ENCODE measurements at regions of chr6 and their contacts with region 1.

Region 1: DNA sequence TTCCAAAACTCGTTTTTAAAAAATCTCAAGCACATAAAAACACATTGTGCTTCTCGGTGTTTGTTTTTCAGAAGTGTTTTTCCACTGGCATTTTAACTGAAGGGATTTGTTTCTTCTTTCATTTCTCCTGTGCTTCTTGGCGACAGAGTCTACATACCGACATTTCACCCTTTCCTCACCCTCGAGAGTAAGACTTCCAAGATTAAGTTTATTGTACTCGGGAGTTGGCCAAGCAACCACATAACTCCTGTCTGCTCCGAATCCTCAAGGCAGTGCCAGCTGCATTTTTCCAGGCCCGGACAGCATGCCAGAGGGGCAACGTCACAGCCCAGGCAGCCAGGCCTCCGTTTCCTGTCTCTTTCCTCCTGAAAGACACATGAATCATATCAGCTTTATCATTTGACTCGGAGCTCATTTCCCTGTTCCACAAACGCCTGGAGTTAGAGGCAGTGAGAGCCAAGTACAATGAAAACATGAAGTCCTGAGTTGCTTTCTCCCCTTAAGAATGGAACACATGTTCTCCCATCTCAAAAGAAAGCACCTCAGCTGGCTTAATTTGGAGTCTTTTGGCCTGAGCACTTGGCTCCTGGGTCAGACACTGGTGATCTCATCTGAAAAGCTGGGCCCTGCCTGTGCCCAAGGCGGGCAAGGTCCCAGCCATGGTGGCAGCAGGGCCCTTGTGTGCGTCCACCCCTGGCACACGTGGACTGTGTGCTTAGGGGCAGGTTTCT is 23.2 kb upstream of the FAM50B start:
- DNase-seq: no peak
- ATAC-seq: peak; percentile 96
- H3K4me3 ChIP-seq: peak overlapping the region; percentile 14 to 35
- H3K27ac ChIP-seq: peak overlapping the region; percentile 96
- H3K4me1 ChIP-seq: peaks cover 28% of the 10 kb centered on the region
- H3K27me3 ChIP-seq: no peaks in the 10 kb centered on the region
- CTCF ChIP-seq: peak; percentile 17; the same call in 1 of the 2 replicates

Region 2: DNA sequence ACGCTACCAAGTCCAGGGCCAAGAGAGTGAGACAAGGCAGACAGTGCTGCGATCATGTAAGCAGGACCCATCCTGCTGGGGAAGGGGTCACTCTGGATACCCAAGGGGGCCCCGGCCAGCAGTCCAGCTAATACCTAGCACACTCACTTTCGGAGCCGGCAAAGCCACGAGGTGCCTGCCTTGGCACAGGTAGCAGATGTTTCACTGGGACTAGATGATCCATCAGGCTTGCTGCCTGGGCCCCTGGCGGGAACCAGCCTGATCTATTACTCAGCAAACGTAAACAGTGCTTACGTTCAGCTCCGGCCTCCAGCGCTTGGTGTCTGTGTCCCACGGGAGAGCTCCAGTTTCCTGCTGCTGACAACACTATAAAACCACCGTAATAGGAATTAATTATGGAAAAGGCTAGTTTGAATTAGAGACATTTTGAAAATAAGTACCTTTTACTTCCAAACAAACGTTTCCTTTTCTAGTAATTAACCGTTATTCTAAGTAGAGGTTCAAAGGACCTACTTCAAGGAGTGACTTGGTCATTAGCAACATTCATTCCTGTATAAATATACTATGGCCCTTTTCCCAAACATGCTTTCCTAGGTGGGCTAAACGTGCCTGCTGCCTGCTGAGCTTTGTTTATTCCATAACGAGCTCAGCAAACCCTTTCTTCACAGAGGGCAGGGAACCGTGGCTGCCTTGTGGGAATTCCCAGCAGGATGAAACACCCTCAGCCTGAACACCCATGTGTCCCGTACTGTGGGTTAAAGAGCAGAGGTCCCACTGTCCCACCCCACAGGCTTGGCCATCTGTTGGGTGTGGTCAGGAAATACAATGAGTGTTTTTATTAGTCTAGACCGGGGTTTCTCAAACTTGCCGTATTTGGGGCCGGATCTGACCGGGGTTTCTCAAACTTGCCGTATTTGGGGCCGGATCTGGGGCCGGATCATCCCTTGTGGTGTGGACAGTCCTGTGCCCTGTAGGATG is 387.5 kb before region 1 on chr6:
- CTCF ChIA-PET with region 1: interaction called, 12 read pairs
- POLR2A ChIA-PET with region 1: no interaction called
- in situ Hi-C with region 1: no loop called
- intact Hi-C with region 1: no loop called
- DNase-seq: no peak
- ATAC-seq: peak; percentile 77
- H3K4me3 ChIP-seq: no peak overlapping the region
- H3K27ac ChIP-seq: no peak overlapping the region
- H3K4me1 ChIP-seq: peaks cover 6% of the 10 kb centered on the region
- H3K27me3 ChIP-seq: no peaks in the 10 kb centered on the region
- CTCF ChIP-seq: no peak

Region 3: GRCh38 chr6:3748208-3749066 is 77.6 kb before region 1 on chr6:
- CTCF ChIA-PET with region 1: no interaction called
- POLR2A ChIA-PET with region 1: interaction called, 3 read pairs
- in situ Hi-C with region 1: no loop called
- intact Hi-C with region 1: loop called (anchors 5 kb)
- DNase-seq: peak; percentile 79
- ATAC-seq: peak; percentile 55
- H3K4me3 ChIP-seq: peak overlapping the region; percentile 62 to 66
- H3K27ac ChIP-seq: peak overlapping the region; percentile 75
- H3K4me1 ChIP-seq: peaks cover 54% of the 10 kb centered on the region
- H3K27me3 ChIP-seq: no peaks in the 10 kb centered on the region
- CTCF ChIP-seq: peak; percentile 92

Region 4: DNA sequence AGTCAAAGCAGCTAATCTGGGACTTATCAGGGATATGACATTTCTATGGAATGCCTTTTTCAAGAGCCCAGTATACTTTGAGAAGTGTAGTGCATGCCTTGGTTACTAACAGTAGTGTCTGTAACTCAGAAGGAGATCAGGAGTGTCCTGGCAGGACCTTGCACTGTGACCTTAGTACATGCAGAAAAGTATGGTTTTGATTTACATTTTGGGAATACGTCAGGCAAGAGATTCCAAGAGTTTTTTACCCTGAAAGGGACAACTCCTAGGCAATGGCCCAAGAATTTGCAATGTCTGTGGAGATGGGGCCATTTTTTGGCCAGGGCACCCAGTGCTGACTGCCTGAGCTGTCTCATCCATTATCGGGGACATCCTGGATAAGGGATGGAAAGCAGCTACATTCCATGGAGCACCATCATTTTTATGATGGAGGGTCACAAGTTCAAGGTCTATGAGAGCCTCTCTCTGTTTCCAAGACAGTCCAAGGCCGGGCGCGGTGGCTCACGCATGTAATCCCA is 103.3 kb after region 1 on chr6:
- CTCF ChIA-PET with region 1: interaction called, 4 read pairs
- POLR2A ChIA-PET with region 1: no interaction called
- in situ Hi-C with region 1: no loop called
- intact Hi-C with region 1: loop called (anchors 5 kb)
- DNase-seq: no peak
- ATAC-seq: no peak
- H3K4me3 ChIP-seq: no peak overlapping the region
- H3K27ac ChIP-seq: no peak overlapping the region
- H3K4me1 ChIP-seq: 0 out of 2 replicates have a peak, but pooled peaks cover 3% of the 10 kb centered on the region
- H3K27me3 ChIP-seq: no peaks in the 10 kb centered on the region
- CTCF ChIP-seq: no peak

Measured in Panc1 (cell line).